Ascending aorta (tissue), 2 donors: ENCODE measurements at regions of chr20 and their contacts with region 1.

Region 1: DNA sequence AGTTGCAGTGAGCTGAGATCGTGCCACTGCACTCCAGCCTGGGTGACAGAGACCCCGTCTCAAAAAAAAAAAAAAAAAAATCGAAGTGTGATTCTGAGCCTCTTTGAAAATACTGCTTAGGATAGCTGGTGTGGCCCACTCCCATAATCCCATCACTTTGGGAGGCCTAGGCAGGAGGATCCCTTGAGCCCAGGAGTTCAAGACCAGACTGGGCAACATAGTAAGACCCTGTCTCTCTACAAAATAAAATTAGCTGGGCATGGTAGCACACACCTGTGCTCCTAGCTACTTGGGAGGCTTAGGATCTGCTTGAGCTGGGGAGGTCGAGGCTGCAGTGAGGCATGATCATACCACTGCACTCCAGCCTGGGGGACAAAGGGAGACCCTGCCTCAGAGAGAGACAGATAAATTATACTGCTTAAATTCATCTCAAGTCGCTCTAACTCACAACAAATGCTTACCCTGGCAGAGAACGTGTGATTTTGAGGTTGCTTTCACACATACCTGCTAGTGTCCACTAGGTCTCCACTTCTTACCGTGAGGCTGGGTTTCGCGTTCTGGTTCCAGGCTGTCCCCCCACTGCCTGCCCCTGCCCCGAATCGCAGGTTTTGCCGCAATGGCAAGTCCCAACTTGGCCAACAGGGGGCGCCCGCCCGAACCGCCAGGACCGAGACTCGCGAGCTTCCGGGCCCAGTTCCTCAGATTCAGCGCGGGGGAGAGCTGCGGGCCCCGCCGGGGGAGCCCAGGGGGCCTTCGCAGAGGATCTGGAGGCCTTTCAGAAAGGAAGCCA is 12.3 kb upstream of the TMC2 start:
- DNase-seq: peak; percentile 42 to 93
- H3K4me3 ChIP-seq: peak overlapping the region; percentile 84 to 94
- H3K27ac ChIP-seq: peak overlapping the region; percentile 92 to 94
- H3K4me1 ChIP-seq: peaks cover 0 to 3% of the 10 kb centered on the region in 2 donors
- H3K27me3 ChIP-seq: no peaks in the 10 kb centered on the region
- CTCF ChIP-seq: peak; percentile 90 to 99 (median 98)

Region 2: DNA sequence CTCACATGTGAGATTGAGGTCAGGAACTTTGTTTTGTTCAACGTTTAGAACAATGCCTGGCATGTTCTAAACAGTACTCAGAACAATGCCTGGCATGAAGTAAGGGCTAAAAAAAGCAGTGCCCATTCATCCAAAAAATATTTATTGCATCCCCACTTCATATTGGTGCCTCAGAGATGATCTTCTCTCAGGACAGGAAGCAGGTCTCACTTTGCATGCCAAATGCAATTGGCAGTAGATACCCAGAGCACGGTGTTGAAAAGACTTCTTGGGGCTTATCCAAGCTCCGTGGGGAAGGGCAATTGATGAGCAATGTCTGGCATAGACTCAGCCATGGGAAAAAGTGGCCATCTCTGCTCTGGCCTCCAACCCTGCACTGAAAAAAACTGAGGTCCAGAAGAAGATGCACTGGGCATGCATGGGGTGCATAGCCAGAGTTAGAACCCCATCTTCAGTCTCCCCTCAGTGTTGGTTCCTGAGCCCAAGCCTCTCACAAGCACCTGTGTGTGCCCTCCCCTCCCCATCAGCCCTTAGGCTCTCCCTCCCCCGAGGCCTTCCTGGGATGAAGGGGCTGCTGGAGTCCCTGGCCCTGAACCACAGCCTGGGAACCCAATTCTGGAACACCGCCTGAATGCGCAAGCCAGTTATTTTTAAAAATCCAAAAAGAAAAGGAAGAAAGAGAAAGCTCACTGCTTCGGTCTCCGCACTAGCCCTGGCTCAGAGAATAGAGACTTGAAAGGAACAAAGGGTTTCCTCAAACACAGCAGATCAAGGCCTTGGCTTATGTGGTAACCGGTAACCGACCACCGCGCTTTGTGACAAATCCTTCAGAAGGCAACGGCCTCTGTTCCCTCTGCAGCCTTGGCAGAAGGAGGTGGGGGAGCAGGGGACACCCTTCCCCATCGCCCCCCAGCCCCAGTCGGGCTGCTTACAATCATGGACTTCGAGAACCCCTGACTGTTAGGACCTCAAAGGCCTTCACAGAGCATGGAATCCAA is 707.4 kb before region 1 on chr20:
- intact Hi-C with region 1: loop called (anchors 10 kb)
- DNase-seq: no peak
- H3K4me3 ChIP-seq: peak overlapping the region in 1 of 2 donors; percentile 37
- H3K27ac ChIP-seq: peak overlapping the region; percentile 80 to 92
- H3K4me1 ChIP-seq: peaks cover 34 to 65% of the 10 kb centered on the region in 2 donors
- H3K27me3 ChIP-seq: no peaks in the 10 kb centered on the region
- CTCF ChIP-seq: no peak

Region 3: DNA sequence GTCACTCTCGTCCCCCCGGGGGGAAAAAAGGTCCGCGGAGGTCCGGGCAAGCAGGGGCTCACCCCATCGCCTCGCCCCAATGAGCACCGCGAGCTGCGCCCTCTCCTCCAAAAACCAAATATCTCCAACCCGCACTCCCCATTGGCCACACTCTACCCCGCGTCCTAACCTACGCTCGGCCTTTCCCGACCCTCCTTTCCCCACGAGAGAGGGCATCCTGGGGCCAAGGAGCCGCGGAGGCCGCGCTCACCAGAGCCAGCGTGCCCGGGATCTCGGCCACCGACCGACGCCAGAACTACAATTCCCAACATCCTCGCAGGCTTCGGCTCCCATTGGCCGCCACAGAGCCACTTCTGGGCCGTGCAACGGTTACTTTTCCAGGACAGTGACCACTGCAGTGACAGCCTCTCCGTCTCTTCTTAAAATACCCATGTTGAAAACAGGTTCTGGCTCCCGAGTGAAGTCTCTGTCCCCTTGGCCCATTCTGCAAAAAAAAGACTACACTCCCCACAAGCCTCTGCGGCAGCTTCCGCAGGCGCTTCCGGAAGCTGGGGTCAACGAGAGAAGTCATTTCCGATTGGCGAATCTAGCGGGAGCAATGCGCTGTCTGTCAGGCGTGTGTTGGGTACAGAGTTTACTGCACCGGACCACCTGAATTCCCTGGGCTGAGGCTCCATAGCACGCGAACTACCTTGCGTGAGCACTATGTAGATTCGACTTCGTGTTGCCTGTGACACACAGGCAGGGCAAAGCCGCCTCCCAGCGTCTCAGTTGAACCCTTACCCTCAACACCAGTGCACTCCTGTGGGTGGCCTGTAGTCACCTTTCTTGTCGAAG is 15.3 kb before region 1 on chr20 and contains the start of gene ZNF343:
- intact Hi-C with region 1: loop called (anchors 1 kb)
- DNase-seq: peak in 1 of 2 donors; percentile 88
- H3K4me3 ChIP-seq: peak within 1 kb of the TSS; percentile 74 to 80
- H3K27ac ChIP-seq: peak within 1 kb of the TSS; percentile 88 to 90
- H3K4me1 ChIP-seq: peaks cover 0 to 13% of the 10 kb centered on the region in 2 donors
- H3K27me3 ChIP-seq: no peaks in the 10 kb centered on the region
- CTCF ChIP-seq: no peak
- total RNA-seq, gene ZNF343: 0.64 TPM

Region 4: GRCh38 chr20:2545594-2545993 is 21.5 kb after region 1 on chr20:
- intact Hi-C with region 1: no loop called
- DNase-seq: no peak
- H3K4me3 ChIP-seq: no peak overlapping the region
- H3K27ac ChIP-seq: no peak overlapping the region
- H3K4me1 ChIP-seq: no peaks in the 10 kb centered on the region
- H3K27me3 ChIP-seq: no peaks in the 10 kb centered on the region
- CTCF ChIP-seq: no peak

Region 5: DNA sequence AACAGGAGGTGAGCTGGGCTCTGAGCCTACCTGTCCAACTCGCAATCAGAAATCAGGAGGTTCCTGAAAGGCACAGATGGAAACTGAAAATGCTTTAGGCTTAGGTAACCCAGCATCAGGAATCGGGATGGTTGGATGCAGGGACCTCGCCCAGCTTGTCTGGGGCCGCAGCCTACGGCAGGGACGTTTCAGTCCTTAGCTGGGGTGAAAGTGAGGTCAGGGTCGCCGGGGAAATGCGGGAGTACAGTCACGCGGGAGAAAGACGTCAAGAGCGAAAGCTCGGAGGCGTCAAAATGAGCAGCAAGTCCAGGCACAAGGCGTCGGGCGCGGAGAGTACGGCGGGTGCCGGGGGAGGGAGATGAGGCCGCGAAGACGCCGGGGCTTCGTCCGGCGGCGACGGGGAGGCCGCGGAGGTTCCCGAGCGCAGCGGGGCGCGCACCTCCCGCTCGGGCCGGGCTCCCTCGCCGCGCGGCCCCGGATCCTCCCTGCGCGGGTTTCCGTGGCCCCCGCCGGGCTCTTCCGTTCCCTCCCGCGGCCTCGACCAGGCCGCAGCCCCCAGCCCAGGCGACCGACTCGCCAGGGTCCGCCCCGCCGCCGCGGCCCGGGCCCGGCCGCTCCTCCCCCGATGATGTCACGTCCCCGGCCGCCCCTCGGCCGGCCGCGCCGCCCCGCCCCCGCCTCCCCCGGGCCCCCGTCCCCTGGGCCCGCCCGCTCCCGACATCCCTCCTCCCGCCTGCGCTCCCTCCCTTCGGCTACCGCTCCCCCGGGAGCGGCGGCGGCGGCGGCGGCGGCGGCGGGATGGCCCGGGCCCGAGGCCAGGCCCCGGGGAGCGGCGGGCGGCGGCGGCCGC is 168.1 kb after region 1 on chr20 and contains the start of gene EBF4:
- intact Hi-C with region 1: loop called (anchors 5 kb)
- DNase-seq: peak in 1 of 2 donors; percentile 71
- H3K4me3 ChIP-seq: peak within 1 kb of the TSS; percentile 65 to 92
- H3K27ac ChIP-seq: peak within 1 kb of the TSS; percentile 83 to 94
- H3K4me1 ChIP-seq: peaks cover 2 to 7% of the 10 kb centered on the region in 2 donors
- H3K27me3 ChIP-seq: peaks cover 6% of the 10 kb centered on the region
- CTCF ChIP-seq: no peak
- total RNA-seq, gene EBF4: 19.2 TPM

Region 6: GRCh38 chr20:2840138-2840966 is 316.2 kb after region 1 on chr20 and contains the starts of genes PCED1A and VPS16:
- intact Hi-C with region 1: loop called (anchors 10 kb)
- DNase-seq: peak; percentile 37 to 92
- H3K4me3 ChIP-seq: peak within 1 kb of the TSS; percentile 73 to 87
- H3K27ac ChIP-seq: peak within 1 kb of the TSS; percentile 86 to 89
- H3K4me1 ChIP-seq: peaks cover 5% of the 10 kb centered on the region in 2 donors
- H3K27me3 ChIP-seq: no peaks in the 10 kb centered on the region
- CTCF ChIP-seq: no peak
- total RNA-seq, gene PCED1A: 49.7 TPM
- total RNA-seq, gene VPS16: 61.1 TPM

Region 7: GRCh38 chr20:3045816-3046676 is 521.9 kb after region 1 on chr20 and contains the start of gene MRPS26:
- intact Hi-C with region 1: loop called (anchors 10 kb)
- DNase-seq: peak; percentile 55 to 94
- H3K4me3 ChIP-seq: peak within 1 kb of the TSS; percentile 89 to 93
- H3K27ac ChIP-seq: peak within 1 kb of the TSS; percentile 91 to 92
- H3K4me1 ChIP-seq: peaks cover 7 to 21% of the 10 kb centered on the region in 2 donors
- H3K27me3 ChIP-seq: no peaks in the 10 kb centered on the region
- CTCF ChIP-seq: no peak
- total RNA-seq, gene MRPS26: 56.4 TPM